Lower leg skin (tissue), 4 donors: ENCODE measurements at regions of chr15 and their contacts with region 1.

Region 1: DNA sequence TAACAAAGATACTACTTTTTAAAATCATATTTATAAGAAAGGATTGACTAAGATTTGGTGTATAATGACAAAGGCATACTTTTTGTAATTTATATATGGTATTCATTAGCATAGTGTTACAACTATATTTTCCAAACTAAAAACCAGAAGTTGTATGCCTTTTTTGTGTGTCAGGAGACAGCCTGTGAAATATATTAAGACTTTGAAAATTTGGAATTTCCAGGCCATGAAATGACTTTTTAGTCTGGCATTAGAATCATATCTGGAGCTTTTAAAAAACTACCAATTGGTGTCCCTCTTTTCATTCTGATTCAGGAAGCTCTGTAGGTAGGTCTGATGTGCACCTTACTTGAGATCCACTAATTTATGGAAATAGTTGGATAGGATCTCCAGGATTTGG is 41.9 kb downstream of the CALML4 start:
- DNase-seq: no peak
- H3K4me3 ChIP-seq: no peak overlapping the region
- CTCF ChIP-seq: no peak
- POLR2A ChIP-seq: no peak

Region 2: DNA sequence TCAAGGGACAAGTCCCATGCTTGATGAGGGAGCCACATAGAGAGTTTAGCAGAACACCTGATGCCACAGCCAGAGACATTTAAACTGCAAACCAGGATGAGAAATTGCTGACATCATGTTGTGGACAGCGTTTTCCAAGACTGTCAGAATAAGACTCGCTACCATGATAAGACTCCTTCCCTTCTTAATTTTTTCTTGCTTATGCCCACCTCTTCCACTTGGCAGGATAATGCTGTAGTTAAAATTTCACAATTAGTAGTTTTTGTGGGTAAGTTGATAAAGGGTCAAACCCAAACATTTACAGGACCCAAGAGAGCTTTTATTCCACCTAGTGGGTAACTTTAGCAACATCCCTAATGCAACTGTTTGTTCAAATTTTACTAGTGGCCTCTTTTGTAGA is 112.1 kb before region 1 on chr15:
- intact Hi-C with region 1: no loop called
- DNase-seq: no peak
- H3K4me3 ChIP-seq: no peak overlapping the region
- CTCF ChIP-seq: no peak
- POLR2A ChIP-seq: no peak

Region 3: DNA sequence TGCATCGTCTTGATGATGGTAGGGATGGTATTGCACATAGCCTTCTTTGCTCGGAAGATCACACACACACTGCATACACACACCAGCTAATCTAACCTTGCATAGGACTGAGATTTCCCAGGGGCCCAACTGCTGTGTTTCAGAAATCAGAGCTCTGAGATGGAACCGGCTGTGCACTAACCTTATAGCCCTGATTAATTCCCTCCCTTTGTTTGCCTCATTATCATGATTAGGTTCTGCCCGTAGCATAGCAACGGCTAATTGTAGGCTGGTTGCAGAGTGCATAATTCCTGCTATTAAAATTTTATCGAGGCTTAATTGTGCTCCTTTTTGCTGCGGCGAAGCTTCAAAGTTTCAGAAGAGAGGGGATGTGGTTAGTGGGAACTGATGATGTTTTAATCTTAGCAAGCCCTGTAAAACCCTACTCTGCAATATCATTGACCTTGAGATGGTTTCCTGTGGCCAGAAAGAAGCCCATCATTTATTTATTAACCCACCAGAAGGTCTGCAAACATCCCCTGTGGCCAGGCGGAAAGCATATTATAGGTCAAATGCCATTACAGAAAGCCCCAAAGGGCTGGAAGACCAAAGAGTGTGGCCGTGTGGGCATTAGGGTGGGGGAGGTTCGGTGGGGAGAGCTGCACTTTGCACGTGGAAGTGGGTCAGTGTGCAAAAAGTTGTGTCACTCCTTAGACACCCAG is 941.0 kb after region 1 on chr15:
- intact Hi-C with region 1: loop called (anchors 5 kb)
- DNase-seq: no peak
- H3K4me3 ChIP-seq: no peak overlapping the region
- CTCF ChIP-seq: no peak
- POLR2A ChIP-seq: no peak